ENCODE measurements at regions of chr2 and their contacts with region 1.

Region 1: DNA sequence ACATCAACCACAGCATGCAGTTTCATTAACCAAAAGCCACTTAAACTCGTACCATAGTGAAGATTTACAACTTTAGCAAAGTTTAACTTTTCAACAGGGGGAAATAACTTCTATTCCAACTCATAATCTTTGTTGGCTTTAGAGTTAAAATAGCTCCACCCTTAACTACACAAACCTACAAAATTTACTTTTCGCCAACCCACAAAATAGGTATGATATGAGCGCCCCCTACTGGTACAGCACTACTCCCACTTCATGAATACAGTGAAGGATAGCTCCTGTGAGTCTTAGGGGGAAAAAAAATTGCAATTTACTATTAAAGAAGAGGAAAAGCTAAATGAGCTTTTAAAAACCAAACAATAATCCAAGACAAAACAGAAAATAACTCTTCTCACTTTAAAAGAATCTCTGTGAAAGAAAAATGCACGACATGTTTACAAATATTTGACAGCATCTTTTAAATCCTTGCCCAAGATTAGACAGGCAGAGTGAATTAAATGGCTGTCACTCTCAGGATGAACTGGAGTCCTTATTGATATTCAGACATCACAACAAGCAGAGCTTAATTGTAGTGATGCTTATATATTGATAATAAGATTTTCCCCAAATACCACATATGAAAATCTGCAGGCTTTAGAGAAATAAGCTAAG is 32.2 kb downstream of the TMEFF2 start:
- DNase-seq: no peak
- H3K4me3 ChIP-seq: peak overlapping the region in 3 of 4 donors; percentile 29 to 39 (median 30)
- H3K27ac ChIP-seq: peak overlapping the region in 1 of 4 donors; percentile 16
- H3K4me1 ChIP-seq: peaks cover 8 to 11% (median 9%) of the 10 kb centered on the region in 4 donors
- H3K27me3 ChIP-seq: no peaks in the 10 kb centered on the region
- CTCF ChIP-seq: peak; percentile 85 to 98 (median 89)
- EP300 ChIP-seq: no peak
- POLR2A ChIP-seq: no peak

Region 2: DNA sequence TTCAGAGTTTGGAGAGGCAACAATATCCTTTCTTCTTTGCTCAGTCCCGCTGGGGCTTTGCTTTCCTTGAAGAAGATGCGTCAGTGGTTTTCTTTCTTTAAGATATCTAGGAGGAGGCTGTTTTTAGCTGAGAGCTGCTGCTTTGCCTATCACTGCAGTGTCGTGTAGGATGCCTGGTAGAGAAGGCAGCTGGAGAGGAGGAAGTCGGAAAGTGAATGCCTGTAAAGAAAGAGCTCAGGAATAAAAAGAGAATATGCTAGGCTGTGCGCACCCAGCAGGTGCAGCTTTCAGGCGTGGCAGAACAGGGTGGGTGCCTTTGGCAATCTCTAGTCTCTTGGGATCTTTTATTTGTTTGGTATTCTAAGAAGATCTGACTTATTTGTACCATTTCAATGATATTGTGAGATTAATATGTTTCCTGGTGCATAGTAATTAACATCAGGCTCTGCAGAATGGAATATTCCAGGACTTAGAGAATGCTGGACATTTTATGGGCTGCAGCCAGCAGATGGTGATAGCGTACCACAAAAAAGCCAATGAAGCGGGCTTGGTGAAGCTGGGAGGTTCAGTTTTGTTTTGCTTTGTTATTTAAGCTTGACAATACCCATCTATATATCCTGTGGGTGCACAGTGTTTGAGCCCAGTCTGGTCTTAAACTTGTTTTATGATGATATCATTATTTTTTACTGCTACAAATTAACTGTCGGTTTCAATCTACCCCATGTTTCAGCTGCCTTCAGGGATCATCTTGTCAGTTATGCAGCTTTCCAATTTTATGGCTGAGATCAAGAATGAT is 350.5 kb before region 1 on chr2:
- intact Hi-C with region 1: loop called (anchors 1 kb)
- DNase-seq: no peak
- H3K4me3 ChIP-seq: peak overlapping the region in 2 of 4 donors; percentile 10 to 44
- H3K27ac ChIP-seq: no peak overlapping the region
- H3K4me1 ChIP-seq: peaks cover 0 to 4% (median 2%) of the 10 kb centered on the region in 4 donors
- H3K27me3 ChIP-seq: no peaks in the 10 kb centered on the region
- CTCF ChIP-seq: peak; percentile 76 to 79 (median 78)
- EP300 ChIP-seq: no peak
- POLR2A ChIP-seq: no peak

Region 3: GRCh38 chr2:191950132-191950874 is 212.2 kb before region 1 on chr2:
- intact Hi-C with region 1: no loop called
- DNase-seq: no peak
- H3K4me3 ChIP-seq: no peak overlapping the region
- H3K27ac ChIP-seq: no peak overlapping the region
- H3K4me1 ChIP-seq: peaks cover 0 to 19% (median 15%) of the 10 kb centered on the region in 4 donors
- H3K27me3 ChIP-seq: no peaks in the 10 kb centered on the region
- CTCF ChIP-seq: no peak
- EP300 ChIP-seq: no peak
- POLR2A ChIP-seq: no peak

Measured in esophagus muscularis mucosa (tissue), 4 donors.